Activated T-helper 2 cell treated with anti-CD3 and anti-CD28 coated beads, Interferon-gamma antibody, Interleukin-2, Interleukin-4, amounts not matched to agents 10 μg/mL and 5 μg/mL and 100 μg/mL, durations not matched to agents 14 hours and 24 hours and 36 hours (primary cell): ENCODE measurements at regions of chr2 and their contacts with region 1.

Region 1: GRCh38 chr2:238288650-238289573 is 502 bp upstream of the PER2 start:
- DNase-seq: peak; percentile 98
- H3K4me3 Mint-ChIP-seq: peak overlapping the region; percentile 90
- H3K27ac Mint-ChIP-seq: peak overlapping the region; percentile 94
- H3K4me1 Mint-ChIP-seq: peaks cover 31% of the 10 kb centered on the region
- H3K27me3 Mint-ChIP-seq: no peaks in the 10 kb centered on the region

Region 2: DNA sequence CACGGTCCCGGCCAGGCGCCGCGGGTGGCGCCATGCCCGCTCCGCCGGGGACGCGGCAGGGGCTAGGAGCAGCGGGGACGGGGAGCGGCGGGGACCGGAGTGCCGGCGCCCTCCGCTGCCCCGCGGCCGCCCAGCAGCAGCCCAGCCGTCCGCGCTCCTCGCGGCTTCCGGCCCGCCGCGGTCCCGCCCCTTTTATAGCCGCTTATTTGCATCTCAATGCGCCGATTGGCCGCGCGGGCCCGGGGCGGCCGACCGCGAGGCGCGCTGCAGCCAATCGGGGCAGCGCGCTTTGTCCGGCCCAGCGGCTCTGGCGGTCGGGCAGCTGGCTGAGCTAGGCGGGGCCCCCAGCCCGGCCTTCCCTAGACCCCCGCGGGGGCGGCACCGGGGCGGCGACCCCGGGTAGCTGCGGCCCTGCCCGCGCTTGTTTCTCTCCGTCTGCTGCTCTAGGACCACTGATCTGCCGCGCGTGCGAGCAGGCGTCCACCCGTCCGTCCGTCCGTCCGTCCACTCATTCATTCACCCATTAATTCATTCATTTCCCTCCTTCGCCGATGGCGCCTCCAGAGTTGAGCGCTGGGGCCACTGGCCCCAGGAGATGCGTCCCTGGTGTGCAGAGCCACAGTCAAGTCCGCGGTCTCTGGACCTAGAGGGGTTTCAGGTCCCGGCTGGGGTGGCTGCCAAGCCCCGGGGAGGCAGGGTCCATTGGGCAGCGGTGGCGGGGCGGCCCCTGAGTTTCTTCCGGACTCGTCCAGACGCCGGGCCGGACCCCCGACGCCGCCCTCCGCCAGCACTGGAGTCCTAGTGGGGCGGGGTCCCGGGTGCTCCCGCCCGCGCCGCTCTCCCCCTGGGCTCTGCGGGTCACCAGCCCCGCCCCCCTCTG is 48.8 kb before region 1 on chr2 and contains the start of gene HES6:
- intact Hi-C with region 1: loop called (anchors 2 kb)
- DNase-seq: peak; percentile 80
- H3K4me3 Mint-ChIP-seq: peak within 1 kb of the TSS; percentile 90
- H3K27ac Mint-ChIP-seq: peak within 1 kb of the TSS; percentile 70
- H3K4me1 Mint-ChIP-seq: peaks cover 3% of the 10 kb centered on the region
- H3K27me3 Mint-ChIP-seq: peaks cover 40% of the 10 kb centered on the region
- total RNA-seq, gene HES6: 10.2 and 10.8 TPM in 2 replicates

Region 3: DNA sequence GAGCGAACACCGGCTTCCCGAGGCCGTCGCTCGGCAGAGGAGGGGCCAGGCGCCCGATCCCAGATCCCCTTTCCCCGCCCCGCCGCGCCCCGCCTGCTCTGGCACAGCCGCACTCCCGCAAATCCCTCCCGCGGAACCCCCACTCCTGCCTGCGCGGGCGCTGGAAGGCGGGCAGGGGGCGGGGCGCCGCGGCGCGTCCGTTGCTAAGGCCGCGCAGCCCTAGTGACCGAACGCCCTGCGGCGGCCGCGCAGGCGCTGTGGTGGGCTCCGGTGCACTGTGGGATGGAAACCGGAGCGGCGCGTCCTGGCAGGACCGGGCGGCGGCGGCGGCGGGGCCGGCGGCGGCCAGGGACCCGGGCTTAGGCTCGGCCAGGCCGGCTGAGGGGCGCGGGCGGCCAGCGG is 31.3 kb after region 1 on chr2 and contains the start of gene TRAF3IP1:
- intact Hi-C with region 1: loop called (anchors 1 kb)
- DNase-seq: peak; percentile 81
- H3K4me3 Mint-ChIP-seq: peak within 1 kb of the TSS; percentile 79
- H3K27ac Mint-ChIP-seq: no peak within 1 kb of the TSS
- H3K4me1 Mint-ChIP-seq: peaks cover 13% of the 10 kb centered on the region
- H3K27me3 Mint-ChIP-seq: peaks cover 16% of the 10 kb centered on the region
- total RNA-seq, gene TRAF3IP1: 13.9 and 14.4 TPM in 2 replicates

Region 4: DNA sequence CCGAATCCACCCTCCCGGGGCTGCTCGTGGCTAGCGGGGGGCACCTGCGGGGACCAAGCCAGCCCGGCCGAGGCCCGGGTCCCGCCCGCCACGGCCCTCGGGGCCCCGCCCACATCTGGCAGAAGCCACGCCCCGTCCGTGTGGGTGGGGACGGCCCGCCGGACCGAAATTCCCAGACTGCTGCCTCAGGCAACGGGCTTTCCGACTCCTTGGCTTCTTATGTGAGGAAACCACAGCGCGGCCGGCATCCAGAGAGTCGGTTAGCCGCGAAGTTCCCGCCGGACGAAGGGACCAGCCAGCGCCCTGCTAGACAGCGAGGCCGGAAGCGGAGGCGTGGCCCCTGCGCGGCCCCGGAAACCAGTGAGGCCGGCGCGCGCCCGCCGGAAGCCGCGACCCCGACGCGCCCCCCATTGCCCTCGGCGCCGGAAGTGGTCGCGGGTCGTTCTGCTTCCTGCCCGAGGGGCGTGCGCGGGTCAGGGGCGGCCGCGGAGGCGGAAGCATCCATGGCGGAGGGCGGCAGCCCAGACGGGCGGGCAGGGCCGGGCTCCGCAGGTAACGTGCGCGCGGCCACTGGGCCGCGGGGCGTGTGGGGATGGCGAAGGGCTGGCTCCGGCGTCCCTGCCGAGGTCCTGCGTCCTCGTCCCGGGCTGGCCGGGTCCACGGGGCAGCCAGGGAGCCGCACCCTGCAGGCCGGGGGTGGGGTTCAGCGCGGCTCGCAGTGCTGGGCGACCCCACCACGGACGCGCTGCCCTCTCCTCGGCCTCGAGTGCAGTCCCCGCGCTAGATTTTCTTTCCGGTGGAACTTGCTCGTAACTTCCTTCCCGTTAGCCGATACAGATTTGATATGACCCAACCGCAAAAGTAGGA is 137.9 kb after region 1 on chr2 and contains the start of gene ASB1:
- intact Hi-C with region 1: loop called (anchors 1 kb)
- DNase-seq: peak; percentile 78
- H3K4me3 Mint-ChIP-seq: peak within 1 kb of the TSS; percentile 89
- H3K27ac Mint-ChIP-seq: peak within 1 kb of the TSS; percentile 91
- H3K4me1 Mint-ChIP-seq: peaks cover 25% of the 10 kb centered on the region
- H3K27me3 Mint-ChIP-seq: no peaks in the 10 kb centered on the region
- total RNA-seq, gene ASB1: 36.3 and 37.4 TPM in 2 replicates